ENCODE measurements at regions of chr13 and their contacts with region 1.

Region 1: DNA sequence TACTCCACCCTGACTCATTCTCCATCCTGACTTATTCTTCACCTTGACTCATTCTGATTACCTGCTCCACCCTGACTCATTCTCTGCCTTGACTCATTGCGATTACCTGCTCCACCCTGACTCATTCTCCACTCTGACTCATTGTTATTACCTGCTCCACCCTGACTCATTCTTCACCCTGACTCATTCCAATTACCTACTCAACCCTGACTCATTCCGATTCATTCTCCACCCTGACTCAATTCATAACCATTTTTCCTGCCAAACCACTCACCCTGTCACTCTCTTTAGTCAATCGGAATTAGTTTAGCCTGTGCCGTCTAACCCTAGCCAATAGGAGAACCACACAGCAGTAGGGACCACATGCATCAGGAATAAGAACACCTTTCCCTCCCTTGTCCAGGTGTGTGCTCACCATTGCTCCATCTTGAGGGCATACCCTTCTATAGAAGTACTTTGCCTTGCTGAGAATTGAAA is 1227.4 kb upstream of the PCDH20 start:
- DNase-seq: no peak

Region 2: GRCh38 chr13:61960981-61961380 is 682.1 kb before region 1 on chr13:
- intact Hi-C with region 1: no loop called
- DNase-seq: no peak

Region 3: GRCh38 chr13:64234255-64234654 is 1591.2 kb after region 1 on chr13:
- intact Hi-C with region 1: loop called in 1 of 2 experiments (anchors 5 kb)
- DNase-seq: no peak